PC-3 (cell line): ENCODE measurements at regions of chr18 and their contacts with region 1.

Region 1: DNA sequence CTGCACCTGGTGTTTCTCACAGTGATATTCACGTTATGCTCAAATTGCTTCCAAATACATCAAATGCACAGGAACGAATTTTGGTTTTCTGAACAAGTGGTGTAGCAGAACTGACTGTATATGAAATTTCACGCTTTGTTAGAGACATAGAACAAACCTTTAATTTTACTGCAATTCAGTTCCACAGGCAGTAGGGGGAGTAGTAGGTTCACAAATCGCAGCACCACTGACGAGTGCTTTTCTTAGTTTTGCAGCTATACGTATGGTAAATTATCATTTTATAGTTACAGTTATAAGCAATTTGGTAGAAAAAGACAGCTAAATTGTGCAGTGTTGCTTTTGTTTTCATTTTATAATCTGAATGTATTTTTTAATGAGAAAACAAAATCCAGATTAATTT is 113.3 kb downstream of the KIAA1328 start:
- DNase-seq: peak; percentile 45
- ATAC-seq: peak; percentile 71; the same call in 1 of the 2 replicates
- H3K4me3 ChIP-seq: no peak overlapping the region
- H3K27ac ChIP-seq: no peak overlapping the region
- H3K4me1 ChIP-seq: peaks cover 2% of the 10 kb centered on the region; the same call in 1 of the 2 replicates
- H3K27me3 ChIP-seq: no peaks in the 10 kb centered on the region
- CTCF ChIP-seq: peak; percentile 69

Region 2: GRCh38 chr18:37335409-37335736 is 393.1 kb after region 1 on chr18:
- CTCF ChIA-PET with region 1: no interaction called
- POLR2A ChIA-PET with region 1: no interaction called
- intact Hi-C with region 1: loop called (anchors 5 kb)
- DNase-seq: no peak
- ATAC-seq: peak; percentile 58; the same call in 1 of the 2 replicates
- H3K4me3 ChIP-seq: no peak overlapping the region
- H3K27ac ChIP-seq: no peak overlapping the region
- H3K4me1 ChIP-seq: no peaks in the 10 kb centered on the region
- H3K27me3 ChIP-seq: no peaks in the 10 kb centered on the region
- CTCF ChIP-seq: 0 out of 2 replicates have a peak, but pooled peaks have one; percentile 23

Region 3: DNA sequence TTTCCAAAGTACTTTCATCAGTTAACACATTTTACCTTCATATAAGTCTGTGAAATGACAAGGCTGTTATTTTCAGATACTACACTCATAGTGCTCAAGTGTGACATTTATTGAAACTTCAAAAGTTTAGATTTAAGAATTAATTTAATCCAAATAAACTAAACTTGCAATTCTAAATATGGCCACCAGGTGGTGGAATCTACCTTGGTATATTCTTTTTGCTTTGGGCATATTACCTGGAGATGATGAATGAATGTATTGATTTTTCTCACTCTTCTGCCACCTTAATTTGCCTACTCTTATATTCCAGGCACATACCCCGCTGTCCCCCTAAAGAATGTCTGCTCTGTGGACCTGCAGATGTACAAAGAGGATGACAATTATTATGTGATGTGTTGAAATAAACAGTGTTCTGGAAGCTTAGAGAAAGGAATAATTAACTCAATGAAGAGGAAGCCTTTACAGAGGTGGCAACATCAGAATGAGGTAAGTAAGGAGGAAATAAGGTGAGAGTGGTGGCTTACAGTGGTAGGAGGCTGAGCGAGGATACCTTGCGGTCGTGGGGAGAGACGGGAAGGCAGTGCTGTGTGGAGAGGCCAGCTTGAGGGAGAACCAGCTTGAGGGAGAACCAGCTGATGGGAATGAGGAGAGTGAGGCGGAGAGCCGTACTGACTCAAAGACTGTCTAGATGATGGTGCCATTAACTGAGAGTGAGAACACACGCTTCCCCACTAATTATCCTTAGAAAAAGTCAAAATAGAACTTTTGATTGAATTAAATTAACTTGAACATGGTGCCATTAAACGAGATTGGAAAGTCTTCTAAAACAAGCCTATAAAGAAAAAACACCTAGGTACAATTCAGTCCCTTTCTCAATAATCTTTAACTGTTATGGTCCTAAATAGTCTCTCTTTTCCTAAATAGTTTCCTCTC is 443.8 kb after region 1 on chr18:
- CTCF ChIA-PET with region 1: no interaction called
- POLR2A ChIA-PET with region 1: no interaction called
- intact Hi-C with region 1: loop called (anchors 5 kb)
- DNase-seq: peak; percentile 47
- ATAC-seq: no peak
- H3K4me3 ChIP-seq: no peak overlapping the region
- H3K27ac ChIP-seq: no peak overlapping the region
- H3K4me1 ChIP-seq: no peaks in the 10 kb centered on the region; the same call in 1 of the 2 replicates
- H3K27me3 ChIP-seq: no peaks in the 10 kb centered on the region
- CTCF ChIP-seq: peak; percentile 62

Region 4: DNA sequence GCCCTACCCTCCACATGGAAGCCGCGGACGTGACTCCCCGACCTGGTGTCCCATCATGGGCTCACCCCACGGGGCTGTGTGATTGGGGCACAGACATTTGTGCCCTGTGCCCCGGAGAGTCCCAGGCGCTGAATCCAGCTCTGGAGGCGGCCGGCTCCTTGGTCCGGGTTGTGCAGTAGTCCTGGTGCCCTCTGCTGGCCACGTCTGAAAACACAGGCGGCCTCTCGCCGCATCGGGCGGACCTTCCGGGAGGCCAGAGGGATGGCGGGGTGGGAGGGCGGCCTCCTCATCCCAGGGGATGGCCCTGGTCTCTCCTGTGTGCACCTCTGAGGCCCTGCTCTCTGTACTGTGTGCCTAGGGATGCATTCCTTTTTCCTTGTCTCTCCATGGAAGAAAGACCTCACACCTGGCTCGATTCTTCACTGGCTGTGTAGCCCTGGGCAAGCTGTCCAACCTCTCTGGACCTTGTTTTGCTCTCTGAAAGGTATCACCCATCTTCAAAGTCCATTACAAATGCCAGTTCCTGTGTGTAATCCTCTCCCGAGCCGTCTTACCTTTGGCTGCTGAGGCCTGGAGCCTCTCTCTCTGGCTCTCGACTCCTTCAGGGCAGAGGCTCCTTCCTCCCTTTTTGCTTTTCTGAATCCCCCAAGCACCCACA is 595.7 kb after region 1 on chr18:
- CTCF ChIA-PET with region 1: no interaction called
- POLR2A ChIA-PET with region 1: no interaction called
- intact Hi-C with region 1: loop called (anchors 5 kb)
- DNase-seq: peak; percentile 41
- ATAC-seq: peak; percentile 90
- H3K4me3 ChIP-seq: no peak overlapping the region
- H3K27ac ChIP-seq: no peak overlapping the region
- H3K4me1 ChIP-seq: no peaks in the 10 kb centered on the region
- H3K27me3 ChIP-seq: no peaks in the 10 kb centered on the region
- CTCF ChIP-seq: peak; percentile 57